ENCODE measurements at regions of chr11 and their contacts with region 1.

Region 1: GRCh38 chr11:73760679-73761402 is at the start of gene RAB6A:
- DNase-seq: peak; percentile 98
- ATAC-seq: peak; percentile 92
- H3K4me3 Mint-ChIP-seq: peak within 1 kb of the TSS; percentile 96
- H3K27ac Mint-ChIP-seq: peak within 1 kb of the TSS; percentile 87
- H3K4me1 Mint-ChIP-seq: peaks cover 24% of the 10 kb centered on the region
- H3K27me3 Mint-ChIP-seq: peaks cover 6% of the 10 kb centered on the region
- total RNA-seq, gene RAB6A: 108 to 126 TPM

Region 2: GRCh38 chr11:73716101-73717056 is 44.5 kb before region 1 on chr11:
- POLR2A ChIA-PET with region 1: no interaction called
- DNase-seq: no peak
- ATAC-seq: peak; percentile 78
- H3K4me3 Mint-ChIP-seq: no peak overlapping the region
- H3K27ac Mint-ChIP-seq: peak overlapping the region; percentile 43
- H3K4me1 Mint-ChIP-seq: peaks cover 6% of the 10 kb centered on the region
- H3K27me3 Mint-ChIP-seq: no peaks in the 10 kb centered on the region

Region 3: GRCh38 chr11:73728000-73728399 is 32.8 kb before region 1 on chr11:
- POLR2A ChIA-PET with region 1: no interaction called
- DNase-seq: no peak
- ATAC-seq: no peak
- H3K4me3 Mint-ChIP-seq: no peak overlapping the region
- H3K27ac Mint-ChIP-seq: no peak overlapping the region
- H3K4me1 Mint-ChIP-seq: peaks cover 12% of the 10 kb centered on the region
- H3K27me3 Mint-ChIP-seq: no peaks in the 10 kb centered on the region

Region 4: GRCh38 chr11:73779084-73779902 is 18.5 kb after region 1 on chr11:
- POLR2A ChIA-PET with region 1: interaction called, 97 read pairs
- DNase-seq: peak; percentile 96
- ATAC-seq: peak; percentile 97
- H3K4me3 Mint-ChIP-seq: peak overlapping the region; percentile 81
- H3K27ac Mint-ChIP-seq: peak overlapping the region; percentile 99
- H3K4me1 Mint-ChIP-seq: peaks cover 16% of the 10 kb centered on the region
- H3K27me3 Mint-ChIP-seq: no peaks in the 10 kb centered on the region

Region 5: GRCh38 chr11:73787643-73788537 is 27.0 kb after region 1 on chr11 and contains the start of gene MRPL48:
- POLR2A ChIA-PET with region 1: interaction called, 18 read pairs
- DNase-seq: peak; percentile 88
- ATAC-seq: peak; percentile 100
- H3K4me3 Mint-ChIP-seq: peak within 1 kb of the TSS; percentile 99
- H3K27ac Mint-ChIP-seq: peak within 1 kb of the TSS; percentile 100
- H3K4me1 Mint-ChIP-seq: peaks cover 27% of the 10 kb centered on the region
- H3K27me3 Mint-ChIP-seq: no peaks in the 10 kb centered on the region
- total RNA-seq, gene MRPL48: 32.8 to 34.7 TPM